IMR-90 (cell line): ENCODE measurements at regions of chr12 and their contacts with region 1.

Region 1: GRCh38 chr12:10235761-10236631 is 23.3 kb downstream of the GABARAPL1 start:
- DNase-seq: peak; percentile 44
- ATAC-seq: peak; percentile 87
- H3K4me3 ChIP-seq: no peak overlapping the region
- H3K27ac ChIP-seq: no peak overlapping the region
- H3K4me1 ChIP-seq: peaks cover 1% of the 10 kb centered on the region; the same call in 1 of the 2 replicates
- H3K27me3 ChIP-seq: no peaks in the 10 kb centered on the region; the same call in 1 of the 2 replicates
- CTCF ChIP-seq: peak; percentile 79
- POLR2A ChIP-seq: no peak
- RAD21 ChIP-seq: peak; percentile 84

Region 2: GRCh38 chr12:10153271-10154144 is 82.5 kb before region 1 on chr12:
- CTCF ChIA-PET with region 1: no interaction called
- POLR2A ChIA-PET with region 1: no interaction called
- dilution Hi-C with region 1: no loop called
- in situ Hi-C with region 1: no loop called
- intact Hi-C with region 1: no loop called
- DNase-seq: peak; percentile 63
- ATAC-seq: peak; percentile 95
- H3K4me3 ChIP-seq: peak overlapping the region; percentile 37
- H3K27ac ChIP-seq: peak overlapping the region; percentile 68
- H3K4me1 ChIP-seq: peaks cover 8% of the 10 kb centered on the region
- H3K27me3 ChIP-seq: no peaks in the 10 kb centered on the region
- CTCF ChIP-seq: peak; percentile 75
- POLR2A ChIP-seq: no peak
- RAD21 ChIP-seq: peak; percentile 77

Region 3: DNA sequence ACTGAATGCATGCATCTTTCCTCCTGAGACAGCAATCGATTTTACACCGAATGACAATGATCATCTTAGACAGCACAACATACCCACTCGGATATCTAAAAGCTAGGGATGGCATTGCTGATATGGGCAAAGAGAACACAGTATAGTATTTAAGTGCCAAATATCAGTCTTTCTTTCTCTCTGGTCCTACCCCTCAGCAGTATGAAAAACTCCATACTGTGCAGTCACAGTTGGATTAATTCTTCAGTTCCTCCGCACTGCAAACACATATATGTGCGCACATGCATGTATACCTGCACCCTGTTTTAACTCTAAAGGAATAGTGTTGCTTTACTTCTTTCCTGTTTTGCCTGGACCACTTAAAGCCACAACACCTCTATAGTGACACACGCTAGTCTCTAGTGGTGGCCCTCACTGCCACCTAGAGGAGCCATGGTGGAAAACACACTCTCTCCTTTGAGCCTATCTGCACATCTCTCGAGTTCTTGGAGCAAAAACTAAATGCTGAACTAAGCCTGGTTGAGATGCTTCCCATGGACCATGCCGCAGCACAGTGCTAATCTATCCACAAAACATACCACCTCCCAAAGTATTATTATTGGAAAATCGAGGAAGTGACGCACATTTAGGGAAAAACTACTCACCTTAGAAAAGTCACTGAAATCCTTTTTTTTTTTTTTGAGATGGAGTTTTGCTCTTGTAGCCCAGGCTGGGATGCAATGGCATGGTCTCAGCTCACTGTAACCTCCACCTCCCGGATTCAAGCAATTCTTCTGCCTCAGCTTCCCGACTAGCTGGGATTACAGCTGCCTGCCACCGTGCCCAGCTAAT is 45.2 kb before region 1 on chr12:
- CTCF ChIA-PET with region 1: no interaction called
- POLR2A ChIA-PET with region 1: no interaction called
- dilution Hi-C with region 1: no loop called
- in situ Hi-C with region 1: no loop called
- intact Hi-C with region 1: loop called (anchors 1 kb)
- DNase-seq: peak; percentile 77
- ATAC-seq: peak; percentile 87
- H3K4me3 ChIP-seq: no peak overlapping the region
- H3K27ac ChIP-seq: peak overlapping the region; percentile 34; the same call in 1 of the 2 replicates
- H3K4me1 ChIP-seq: peaks cover 12% of the 10 kb centered on the region
- H3K27me3 ChIP-seq: no peaks in the 10 kb centered on the region
- CTCF ChIP-seq: peak; percentile 85
- POLR2A ChIP-seq: no peak
- RAD21 ChIP-seq: peak; percentile 87

Region 4: DNA sequence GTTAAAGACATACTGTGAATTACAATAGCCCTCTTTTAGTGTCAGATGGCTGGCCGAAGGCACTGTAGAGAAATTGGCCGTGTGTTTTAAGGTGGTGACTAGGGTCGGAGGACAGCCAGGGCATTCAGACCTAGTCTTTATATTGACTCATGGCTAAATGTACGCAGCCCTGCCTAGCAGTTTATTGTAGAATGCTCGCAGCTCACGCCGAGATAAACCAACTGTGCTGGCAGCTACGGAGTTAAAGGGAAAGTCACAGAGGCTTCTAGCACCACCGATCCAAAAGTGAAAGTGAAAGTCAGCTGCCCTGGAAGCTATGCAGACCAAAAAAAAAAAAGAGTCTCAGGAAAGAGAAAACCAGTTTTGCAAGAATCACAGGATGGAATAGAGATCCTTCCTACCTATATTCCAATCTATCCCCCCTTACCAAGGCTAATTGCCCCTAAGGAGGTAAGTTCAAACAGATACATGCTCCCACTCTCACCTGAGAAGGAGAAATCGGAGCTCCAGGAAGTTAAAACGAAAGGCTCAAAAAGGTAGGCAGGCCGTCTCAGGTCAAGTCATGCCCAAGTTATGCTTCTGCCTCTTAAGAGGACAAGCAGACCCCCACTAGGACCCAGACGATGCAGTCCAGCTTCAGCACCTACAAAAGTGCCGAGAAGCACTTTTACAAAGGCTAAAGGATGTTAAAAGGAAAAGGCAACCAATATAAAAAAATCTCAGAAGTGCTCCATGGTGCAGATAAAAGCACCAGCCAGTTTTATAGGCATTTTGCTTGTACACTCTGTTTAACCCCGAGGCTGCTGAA is 129.0 kb after region 1 on chr12:
- CTCF ChIA-PET with region 1: no interaction called
- POLR2A ChIA-PET with region 1: no interaction called
- dilution Hi-C with region 1: no loop called
- in situ Hi-C with region 1: no loop called
- intact Hi-C with region 1: loop called (anchors 2 kb)
- DNase-seq: peak; percentile 84
- ATAC-seq: peak; percentile 58
- H3K4me3 ChIP-seq: peak overlapping the region; percentile 54
- H3K27ac ChIP-seq: peak overlapping the region; percentile 92
- H3K4me1 ChIP-seq: peaks cover 22% of the 10 kb centered on the region
- H3K27me3 ChIP-seq: no peaks in the 10 kb centered on the region
- CTCF ChIP-seq: no peak
- POLR2A ChIP-seq: no peak
- RAD21 ChIP-seq: no peak; the same call in 1 of the 2 replicates

Region 5: GRCh38 chr12:10673660-10674384 is 437.8 kb after region 1 on chr12 and contains the start of gene STYK1:
- CTCF ChIA-PET with region 1: no interaction called
- POLR2A ChIA-PET with region 1: no interaction called
- dilution Hi-C with region 1: no loop called
- in situ Hi-C with region 1: no loop called
- intact Hi-C with region 1: loop called (anchors 2 kb)
- DNase-seq: peak; percentile 8
- ATAC-seq: peak; percentile 90
- H3K4me3 ChIP-seq: peak within 1 kb of the TSS; percentile 73
- H3K27ac ChIP-seq: no peak within 1 kb of the TSS
- H3K4me1 ChIP-seq: no peaks in the 10 kb centered on the region
- H3K27me3 ChIP-seq: peaks cover 10% of the 10 kb centered on the region
- CTCF ChIP-seq: peak; percentile 85
- POLR2A ChIP-seq: 0 out of 2 replicates have a peak, but pooled peaks have one; percentile 22
- RAD21 ChIP-seq: peak; percentile 84
- total RNA-seq, gene STYK1: 0.72 and 1.1 TPM in 2 replicates